HCT116 (cell line): ENCODE measurements at regions of chr12 and their contacts with region 1.

Region 1: GRCh38 chr12:46546634-46547286 is 174.2 kb upstream of the SLC38A2 start:
- DNase-seq: no peak
- ATAC-seq: no peak
- H3K4me3 ChIP-seq: no peak overlapping the region
- H3K27ac ChIP-seq: peak overlapping the region; percentile 91
- H3K4me1 ChIP-seq: peaks cover 55 to 58% of the 10 kb centered on the region in 2 experiments
- H3K27me3 ChIP-seq: no peaks in the 10 kb centered on the region
- CTCF ChIP-seq: no peak
- POLR2A ChIP-seq: no peak
- RAD21 ChIP-seq: no peak

Region 2: GRCh38 chr12:46024099-46024498 is 522.7 kb before region 1 on chr12:
- CTCF ChIA-PET with region 1: no interaction called
- POLR2A ChIA-PET with region 1: no interaction called
- RAD21 ChIA-PET with region 1: no interaction called
- intact Hi-C with region 1: no loop called
- DNase-seq: no peak
- ATAC-seq: no peak
- H3K4me3 ChIP-seq: no peak overlapping the region
- H3K27ac ChIP-seq: no peak overlapping the region
- H3K4me1 ChIP-seq: no peaks in the 10 kb centered on the region
- H3K27me3 ChIP-seq: no peaks in the 10 kb centered on the region
- CTCF ChIP-seq: no peak
- POLR2A ChIP-seq: no peak
- RAD21 ChIP-seq: no peak

Region 3: GRCh38 chr12:46442239-46442638 is 104.5 kb before region 1 on chr12:
- CTCF ChIA-PET with region 1: no interaction called
- POLR2A ChIA-PET with region 1: interaction called, 3 read pairs
- RAD21 ChIA-PET with region 1: no interaction called
- intact Hi-C with region 1: loop called (anchors 5 kb)
- DNase-seq: no peak
- ATAC-seq: peak; percentile 68
- H3K4me3 ChIP-seq: peak overlapping the region in 1 of 2 experiments; percentile 21; a peak in 1 of 4 replicates
- H3K27ac ChIP-seq: peak overlapping the region; percentile 93
- H3K4me1 ChIP-seq: peaks cover 84 to 98% of the 10 kb centered on the region in 2 experiments
- H3K27me3 ChIP-seq: no peaks in the 10 kb centered on the region
- CTCF ChIP-seq: no peak
- POLR2A ChIP-seq: no peak
- RAD21 ChIP-seq: no peak

Region 4: DNA sequence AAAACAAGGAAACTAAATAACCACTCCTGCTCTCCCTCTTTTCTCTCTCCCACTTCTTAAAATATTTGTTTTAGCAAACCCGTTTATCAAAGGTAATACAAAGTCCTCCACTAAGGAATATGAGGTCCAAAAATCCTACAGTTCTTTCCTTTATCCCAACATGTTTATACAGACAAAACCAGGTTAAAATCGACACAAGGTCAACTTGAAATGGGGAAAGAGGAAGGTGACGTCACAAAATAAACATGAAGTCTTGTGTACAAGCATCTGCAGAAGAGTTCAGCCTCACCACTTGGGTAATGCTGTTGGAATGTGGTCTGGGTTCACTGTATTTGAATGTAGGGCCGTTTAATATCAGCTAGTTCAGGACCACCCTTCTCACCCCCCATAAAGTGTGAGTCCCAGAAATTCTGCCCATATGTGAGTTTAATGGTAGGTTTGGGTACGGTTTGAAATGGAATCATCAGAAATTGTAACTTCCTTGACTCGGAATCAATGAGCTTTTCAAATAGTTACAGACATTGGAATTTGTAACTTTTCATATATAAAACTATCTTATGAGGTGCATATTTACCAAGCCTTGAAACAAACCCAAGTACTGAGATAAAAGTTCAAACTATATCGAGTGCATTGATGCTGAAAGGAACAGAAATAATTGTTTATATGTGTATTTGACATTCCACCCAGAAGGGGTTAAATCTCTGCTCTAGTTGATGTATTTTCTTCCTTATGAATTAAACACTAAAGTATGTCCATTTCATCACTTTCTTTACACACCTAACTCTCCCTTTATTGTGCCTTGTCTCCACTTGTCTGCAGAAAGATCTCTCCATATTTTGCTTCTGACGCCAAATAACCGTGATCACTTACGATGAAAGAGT is 54.0 kb before region 1 on chr12:
- CTCF ChIA-PET with region 1: no interaction called
- POLR2A ChIA-PET with region 1: interaction called, 5 read pairs
- RAD21 ChIA-PET with region 1: no interaction called
- intact Hi-C with region 1: loop called (anchors 5 kb)
- DNase-seq: peak; percentile 85
- ATAC-seq: peak; percentile 57
- H3K4me3 ChIP-seq: no peak overlapping the region
- H3K27ac ChIP-seq: peak overlapping the region; percentile 73
- H3K4me1 ChIP-seq: peaks cover 71 to 72% of the 10 kb centered on the region in 2 experiments
- H3K27me3 ChIP-seq: no peaks in the 10 kb centered on the region
- CTCF ChIP-seq: no peak
- POLR2A ChIP-seq: no peak
- RAD21 ChIP-seq: no peak

Region 5: GRCh38 chr12:46523863-46524770 is 22.6 kb before region 1 on chr12:
- CTCF ChIA-PET with region 1: no interaction called
- POLR2A ChIA-PET with region 1: interaction called, 11 read pairs
- RAD21 ChIA-PET with region 1: no interaction called
- intact Hi-C with region 1: no loop called
- DNase-seq: peak; percentile 91
- ATAC-seq: peak; percentile 95
- H3K4me3 ChIP-seq: peak overlapping the region; percentile 41 to 46
- H3K27ac ChIP-seq: peak overlapping the region; percentile 48
- H3K4me1 ChIP-seq: peaks cover 38 to 50% of the 10 kb centered on the region in 2 experiments
- H3K27me3 ChIP-seq: no peaks in the 10 kb centered on the region
- CTCF ChIP-seq: no peak
- POLR2A ChIP-seq: no peak
- RAD21 ChIP-seq: 0 out of 2 replicates have a peak, but pooled peaks have one; percentile 8

Region 6: DNA sequence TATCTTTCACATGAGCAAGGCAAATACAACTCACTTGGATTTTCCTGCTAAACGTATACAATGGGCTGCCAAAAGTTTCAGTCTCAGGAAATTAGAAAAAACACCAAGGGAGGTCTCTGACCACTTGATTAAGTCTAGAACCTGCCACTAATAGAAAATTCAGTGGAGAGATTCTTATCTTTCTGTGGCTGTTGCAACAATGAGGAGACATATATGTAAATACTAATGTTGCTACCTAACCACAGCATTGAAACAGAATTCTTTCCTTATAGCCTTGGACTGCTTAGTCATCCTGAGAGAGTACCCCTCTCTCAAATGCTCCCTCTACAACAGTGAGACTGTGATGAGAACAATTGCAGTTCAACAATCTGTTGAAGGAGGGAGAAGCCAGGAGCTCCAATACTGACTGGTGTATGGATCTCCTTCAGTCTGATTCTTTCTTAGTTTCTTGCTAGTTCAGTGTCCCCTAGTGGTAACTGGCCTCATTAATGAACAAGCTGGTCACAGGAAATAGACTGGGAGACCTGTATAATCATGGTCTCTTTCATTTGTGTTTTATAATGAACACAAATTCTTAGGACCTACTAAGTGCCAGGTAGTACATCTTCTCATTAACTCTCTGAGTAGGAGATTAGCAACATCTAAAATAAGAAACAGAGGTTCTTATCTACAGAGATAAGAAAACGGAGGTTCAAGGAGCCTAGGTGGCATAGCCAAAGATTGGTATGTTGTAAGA is 114.5 kb after region 1 on chr12:
- CTCF ChIA-PET with region 1: no interaction called
- POLR2A ChIA-PET with region 1: no interaction called
- RAD21 ChIA-PET with region 1: no interaction called
- intact Hi-C with region 1: loop called (anchors 5 kb)
- DNase-seq: peak; percentile 71
- ATAC-seq: peak; percentile 78
- H3K4me3 ChIP-seq: no peak overlapping the region
- H3K27ac ChIP-seq: peak overlapping the region; percentile 21; the same call in 1 of the 2 replicates
- H3K4me1 ChIP-seq: peaks cover 53 to 65% of the 10 kb centered on the region in 2 experiments
- H3K27me3 ChIP-seq: no peaks in the 10 kb centered on the region
- CTCF ChIP-seq: peak; percentile 69 to 87 (median 73); a peak in 5 of 6 replicates
- POLR2A ChIP-seq: no peak
- RAD21 ChIP-seq: peak; percentile 93